ENCODE measurements at regions of chr22 and their contacts with region 1.

Region 1: GRCh38 chr22:42202669-42203068 is 67.8 kb downstream of the TCF20 start:
- DNase-seq: peak; percentile 31 to 83 (median 45)
- H3K4me3 ChIP-seq: peak overlapping the region in 1 of 2 donors; percentile 25
- H3K4me3 Mint-ChIP-seq: peak overlapping the region; percentile 63 to 88 (median 79)
- H3K27ac ChIP-seq: peak overlapping the region; percentile 42
- H3K27ac Mint-ChIP-seq: peak overlapping the region; percentile 79 to 94 (median 89)
- H3K4me1 ChIP-seq: peaks cover 60% of the 10 kb centered on the region
- H3K4me1 Mint-ChIP-seq: peaks cover 47 to 79% (median 61%) of the 10 kb centered on the region in 4 donors
- H3K27me3 ChIP-seq: no peaks in the 10 kb centered on the region
- H3K27me3 Mint-ChIP-seq: no peaks in the 10 kb centered on the region

Region 2: GRCh38 chr22:42180349-42180842 is 22.3 kb before region 1 on chr22:
- CTCF ChIA-PET with region 1: interaction called, 3 read pairs
- POLR2A ChIA-PET with region 1: interaction called, 10 read pairs
- intact Hi-C with region 1: loop called (anchors 1 kb)
- DNase-seq: peak; percentile 76 to 86 (median 84)
- H3K4me3 ChIP-seq: no peak overlapping the region
- H3K4me3 Mint-ChIP-seq: peak overlapping the region in 7 of 8 donors; percentile 55 to 89 (median 72)
- H3K27ac ChIP-seq: peak overlapping the region; percentile 58
- H3K27ac Mint-ChIP-seq: peak overlapping the region; percentile 92 to 97 (median 96)
- H3K4me1 ChIP-seq: peaks cover 90% of the 10 kb centered on the region
- H3K4me1 Mint-ChIP-seq: peaks cover 71 to 96% (median 83%) of the 10 kb centered on the region in 4 donors
- H3K27me3 ChIP-seq: no peaks in the 10 kb centered on the region
- H3K27me3 Mint-ChIP-seq: no peaks in the 10 kb centered on the region

Region 3: GRCh38 chr22:42214633-42215415 is 12.2 kb after region 1 on chr22:
- CTCF ChIA-PET with region 1: interaction called, 7 read pairs
- POLR2A ChIA-PET with region 1: interaction called, 15 read pairs
- intact Hi-C with region 1: no loop called
- DNase-seq: no peak
- H3K4me3 ChIP-seq: no peak overlapping the region
- H3K4me3 Mint-ChIP-seq: no peak overlapping the region
- H3K27ac ChIP-seq: no peak overlapping the region
- H3K27ac Mint-ChIP-seq: peak overlapping the region in 6 of 7 donors; percentile 13 to 74 (median 50)
- H3K4me1 ChIP-seq: peaks cover 44% of the 10 kb centered on the region
- H3K4me1 Mint-ChIP-seq: peaks cover 40 to 65% (median 49%) of the 10 kb centered on the region in 4 donors
- H3K27me3 ChIP-seq: no peaks in the 10 kb centered on the region
- H3K27me3 Mint-ChIP-seq: no peaks in the 10 kb centered on the region

Region 4: DNA sequence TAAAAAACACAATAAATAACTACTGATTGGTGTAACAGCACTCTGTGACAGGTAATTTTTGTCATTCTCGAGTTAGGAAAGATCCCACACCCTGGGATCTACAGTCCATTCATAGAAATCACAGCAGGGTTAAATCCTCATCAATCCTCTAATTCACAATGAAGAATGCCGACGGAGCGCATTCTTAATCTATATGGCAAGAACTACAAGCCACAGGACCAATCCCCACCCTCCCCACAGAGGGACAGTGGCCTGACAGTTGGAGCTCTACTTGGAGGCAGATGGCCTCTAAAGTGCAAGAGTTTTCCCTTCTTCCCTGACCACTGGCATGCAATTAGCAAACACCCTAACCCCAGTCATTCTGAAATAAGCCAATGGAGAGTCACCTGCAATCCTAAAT is 33.6 kb after region 1 on chr22:
- CTCF ChIA-PET with region 1: no interaction called
- POLR2A ChIA-PET with region 1: no interaction called
- intact Hi-C with region 1: no loop called
- DNase-seq: no peak
- H3K4me3 ChIP-seq: no peak overlapping the region
- H3K4me3 Mint-ChIP-seq: no peak overlapping the region
- H3K27ac ChIP-seq: no peak overlapping the region
- H3K27ac Mint-ChIP-seq: peak overlapping the region in 3 of 7 donors; percentile 46 to 73 (median 69)
- H3K4me1 ChIP-seq: peaks cover 36% of the 10 kb centered on the region
- H3K4me1 Mint-ChIP-seq: peaks cover 41 to 72% (median 55%) of the 10 kb centered on the region in 4 donors
- H3K27me3 ChIP-seq: no peaks in the 10 kb centered on the region
- H3K27me3 Mint-ChIP-seq: no peaks in the 10 kb centered on the region

Region 5: GRCh38 chr22:42270512-42271417 is 68.1 kb after region 1 on chr22 and contains the start of gene TCF20:
- CTCF ChIA-PET with region 1: no interaction called
- POLR2A ChIA-PET with region 1: interaction called, 3 read pairs
- intact Hi-C with region 1: loop called (anchors 2 kb)
- DNase-seq: peak; percentile 78 to 82 (median 80)
- H3K4me3 ChIP-seq: peak within 1 kb of the TSS; percentile 26 to 80
- H3K4me3 Mint-ChIP-seq: peak within 1 kb of the TSS; percentile 88 to 95 (median 93)
- H3K27ac ChIP-seq: peak within 1 kb of the TSS; percentile 91
- H3K27ac Mint-ChIP-seq: peak within 1 kb of the TSS; percentile 87 to 95 (median 90)
- H3K4me1 ChIP-seq: peaks cover 42% of the 10 kb centered on the region
- H3K4me1 Mint-ChIP-seq: peaks cover 21 to 39% (median 29%) of the 10 kb centered on the region in 4 donors
- H3K27me3 ChIP-seq: no peaks in the 10 kb centered on the region
- H3K27me3 Mint-ChIP-seq: no peaks in the 10 kb centered on the region
- total RNA-seq, gene TCF20: 88.7 to 93.4 TPM

Measured in CD4-positive, alpha-beta memory T cell (primary cell).